Vagina (tissue), 2 donors: ENCODE measurements at regions of chrX and their contacts with region 1.

Region 1: GRCh38 chrX:130060122-130061069 is 49.9 kb downstream of the ELF4 start:
- DNase-seq: peak in 1 of 2 donors; percentile 88
- H3K4me3 ChIP-seq: peak overlapping the region; percentile 45 to 52
- H3K27ac ChIP-seq: peak overlapping the region; percentile 58
- H3K4me1 ChIP-seq: peaks cover 5% of the 10 kb centered on the region
- H3K27me3 ChIP-seq: no peaks in the 10 kb centered on the region
- CTCF ChIP-seq: peak; percentile 63 to 82 (median 79)
- POLR2A ChIP-seq: no peak

Region 2: GRCh38 chrX:129925305-129926092 is 134.9 kb before region 1 on chrX:
- intact Hi-C with region 1: loop called (anchors 1 kb)
- DNase-seq: no peak
- H3K4me3 ChIP-seq: no peak overlapping the region
- H3K27ac ChIP-seq: no peak overlapping the region
- H3K4me1 ChIP-seq: no peaks in the 10 kb centered on the region
- H3K27me3 ChIP-seq: no peaks in the 10 kb centered on the region
- CTCF ChIP-seq: peak in 2 of 3 experiments; percentile 53 to 61
- POLR2A ChIP-seq: no peak

Region 3: DNA sequence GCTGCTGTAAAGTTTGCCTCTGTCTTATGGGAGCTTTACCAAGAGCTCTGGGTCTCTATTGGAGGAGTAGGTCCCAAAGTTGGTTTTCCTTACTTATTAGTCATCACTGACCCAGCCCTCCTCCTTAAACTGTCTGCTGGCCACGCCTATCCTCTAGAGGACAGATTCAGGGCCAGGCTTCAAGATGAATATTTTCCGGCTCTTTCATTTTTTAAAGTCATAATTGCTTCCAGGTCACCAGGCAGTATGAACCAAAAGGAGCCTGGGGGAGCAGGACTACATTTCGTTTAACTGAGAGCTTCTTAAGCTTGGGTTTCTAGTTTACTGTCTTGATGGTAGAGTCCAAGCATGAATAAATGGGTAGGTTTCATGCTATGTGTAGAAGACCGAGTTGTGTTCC is 64.3 kb before region 1 on chrX:
- intact Hi-C with region 1: no loop called
- DNase-seq: no peak
- H3K4me3 ChIP-seq: no peak overlapping the region
- H3K27ac ChIP-seq: no peak overlapping the region
- H3K4me1 ChIP-seq: peaks cover 11% of the 10 kb centered on the region
- H3K27me3 ChIP-seq: no peaks in the 10 kb centered on the region
- CTCF ChIP-seq: no peak
- POLR2A ChIP-seq: no peak

Region 4: DNA sequence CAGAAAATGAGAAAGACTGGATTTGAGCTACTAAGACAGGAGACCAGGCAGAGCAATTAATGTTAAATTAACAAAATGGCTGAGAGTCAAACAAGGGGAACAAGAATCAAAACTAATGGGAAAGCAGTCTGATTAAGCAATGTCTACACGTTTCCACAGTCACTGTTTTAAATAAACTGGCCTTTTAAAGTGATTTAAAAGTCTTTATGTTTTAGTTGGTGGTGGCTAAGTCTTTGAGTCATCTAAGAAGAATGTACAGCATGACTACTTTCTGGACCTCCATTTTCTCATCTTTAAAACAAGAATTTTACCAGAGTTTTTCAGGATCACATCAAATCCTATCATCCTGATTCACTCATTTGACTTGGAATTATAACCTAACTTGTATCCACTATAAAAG is 608.8 kb after region 1 on chrX:
- intact Hi-C with region 1: no loop called
- DNase-seq: no peak
- H3K4me3 ChIP-seq: no peak overlapping the region
- H3K27ac ChIP-seq: no peak overlapping the region
- H3K4me1 ChIP-seq: no peaks in the 10 kb centered on the region
- H3K27me3 ChIP-seq: no peaks in the 10 kb centered on the region
- CTCF ChIP-seq: no peak
- POLR2A ChIP-seq: no peak